MCF 10A (cell line): ENCODE measurements at regions of chr5 and their contacts with region 1.

Region 1: GRCh38 chr5:178232124-178232919 is at the start of gene PHYKPL:
- DNase-seq: peak; percentile 84
- H3K4me3 Mint-ChIP-seq: peak within 1 kb of the TSS; percentile 80
- H3K27ac Mint-ChIP-seq: peak within 1 kb of the TSS; percentile 84
- H3K4me1 Mint-ChIP-seq: peaks cover 57% of the 10 kb centered on the region
- H3K27me3 Mint-ChIP-seq: no peaks in the 10 kb centered on the region
- CTCF ChIP-seq: no peak
- total RNA-seq, gene PHYKPL: 112 and 115 TPM in 2 replicates

Region 2: DNA sequence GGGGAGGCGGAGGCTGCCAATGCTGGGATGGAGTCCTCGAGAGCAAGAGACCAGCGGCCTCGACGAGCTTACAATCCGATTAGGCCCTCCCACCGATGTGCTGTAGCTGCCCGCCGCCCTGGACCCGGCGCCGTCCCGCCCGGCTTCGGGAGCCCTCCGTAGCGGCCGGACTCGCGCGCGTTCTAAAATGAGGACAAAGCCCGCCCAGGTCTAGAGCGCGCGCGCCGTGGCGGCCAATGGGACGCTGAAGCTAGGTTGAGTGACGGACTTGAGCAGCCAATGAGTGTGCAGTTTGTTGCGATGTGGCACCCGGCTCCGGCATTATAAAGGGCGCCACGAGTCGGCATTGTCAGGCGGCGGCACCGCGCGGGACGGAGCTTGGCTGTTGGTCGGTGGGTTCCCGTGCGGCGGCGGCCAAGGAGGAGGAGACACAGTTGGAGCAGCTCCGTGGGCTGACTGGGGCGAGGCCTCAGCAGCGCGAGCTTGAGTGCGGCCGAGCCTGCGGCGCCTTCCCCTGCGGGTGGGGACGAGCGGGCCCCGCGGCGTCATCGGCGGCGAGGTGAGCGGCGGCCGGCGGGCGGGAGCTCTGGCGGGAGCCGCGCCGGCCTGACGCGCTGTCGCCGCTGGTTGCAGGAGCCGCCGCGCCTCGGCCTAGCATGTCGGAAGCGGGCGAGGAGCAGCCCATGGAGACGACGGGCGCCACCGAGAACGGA is 28.0 kb before region 1 on chr5 and contains the start of gene HNRNPAB:
- CTCF ChIA-PET with region 1: interaction called, 5 read pairs
- POLR2A ChIA-PET with region 1: interaction called, 32 read pairs
- intact Hi-C with region 1: loop called (anchors 2 kb)
- DNase-seq: peak; percentile 98
- H3K4me3 Mint-ChIP-seq: peak within 1 kb of the TSS; percentile 99
- H3K27ac Mint-ChIP-seq: peak within 1 kb of the TSS; percentile 99
- H3K4me1 Mint-ChIP-seq: peaks cover 50% of the 10 kb centered on the region
- H3K27me3 Mint-ChIP-seq: no peaks in the 10 kb centered on the region
- CTCF ChIP-seq: no peak
- total RNA-seq, gene HNRNPAB: 313 and 364 TPM in 2 replicates

Region 3: GRCh38 chr5:178213003-178213449 is 19.3 kb before region 1 on chr5:
- CTCF ChIA-PET with region 1: interaction called, 5 read pairs
- POLR2A ChIA-PET with region 1: interaction called, 32 read pairs
- intact Hi-C with region 1: no loop called
- DNase-seq: no peak
- H3K4me3 Mint-ChIP-seq: no peak overlapping the region
- H3K27ac Mint-ChIP-seq: peak overlapping the region; percentile 61
- H3K4me1 Mint-ChIP-seq: peaks cover 14% of the 10 kb centered on the region
- H3K27me3 Mint-ChIP-seq: no peaks in the 10 kb centered on the region
- CTCF ChIP-seq: no peak

Region 4: GRCh38 chr5:178252258-178252657 is 19.9 kb after region 1 on chr5:
- CTCF ChIA-PET with region 1: interaction called, 22 read pairs
- POLR2A ChIA-PET with region 1: interaction called, 5 read pairs
- intact Hi-C with region 1: no loop called
- DNase-seq: no peak
- H3K4me3 Mint-ChIP-seq: no peak overlapping the region
- H3K27ac Mint-ChIP-seq: no peak overlapping the region
- H3K4me1 Mint-ChIP-seq: peaks cover 7% of the 10 kb centered on the region
- H3K27me3 Mint-ChIP-seq: no peaks in the 10 kb centered on the region
- CTCF ChIP-seq: no peak

Region 5: DNA sequence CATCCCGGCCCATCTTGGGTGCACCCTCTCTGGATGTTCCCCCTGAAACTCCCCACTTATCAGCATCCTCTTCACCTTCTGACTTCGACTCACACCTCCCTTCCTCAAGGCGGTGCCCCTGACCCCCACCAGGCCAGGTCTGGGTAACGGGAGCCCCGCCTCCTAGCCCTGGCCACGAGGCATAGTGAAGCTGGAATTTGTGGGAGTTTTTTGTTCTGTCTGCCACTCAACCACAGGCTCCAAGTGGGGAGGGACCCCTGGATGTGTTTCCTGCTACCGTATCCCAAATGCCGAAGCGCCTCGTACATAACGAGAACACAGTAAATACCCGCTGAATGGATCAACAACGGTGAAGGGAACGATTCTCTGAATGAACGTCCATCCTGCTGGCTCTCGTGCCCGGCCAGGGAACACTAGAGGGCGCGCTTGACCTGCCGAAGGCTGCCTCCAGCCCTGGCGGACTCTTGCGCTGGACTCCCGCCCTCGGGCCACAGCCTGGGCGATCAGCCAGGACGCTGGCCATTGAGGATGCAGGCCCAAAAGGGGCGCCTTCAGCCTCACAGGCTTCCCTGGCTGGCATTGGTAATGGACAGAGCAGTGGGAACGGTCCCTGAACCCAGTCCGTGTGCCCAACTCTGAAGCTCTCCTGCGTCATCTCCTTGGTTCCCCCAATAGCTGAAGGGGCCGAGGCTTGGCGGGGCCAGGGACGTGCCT is 47.6 kb after region 1 on chr5:
- CTCF ChIA-PET with region 1: interaction called, 10 read pairs
- POLR2A ChIA-PET with region 1: interaction called, 3 read pairs
- intact Hi-C with region 1: loop called (anchors 2 kb)
- DNase-seq: peak; percentile 87
- H3K4me3 Mint-ChIP-seq: no peak overlapping the region
- H3K27ac Mint-ChIP-seq: no peak overlapping the region
- H3K4me1 Mint-ChIP-seq: peaks cover 30% of the 10 kb centered on the region
- H3K27me3 Mint-ChIP-seq: no peaks in the 10 kb centered on the region
- CTCF ChIP-seq: peak; percentile 99

Region 6: GRCh38 chr5:178304761-178305645 is 72.7 kb after region 1 on chr5:
- CTCF ChIA-PET with region 1: no interaction called
- POLR2A ChIA-PET with region 1: no interaction called
- intact Hi-C with region 1: no loop called
- DNase-seq: no peak
- H3K4me3 Mint-ChIP-seq: no peak overlapping the region
- H3K27ac Mint-ChIP-seq: no peak overlapping the region
- H3K4me1 Mint-ChIP-seq: no peaks in the 10 kb centered on the region
- H3K27me3 Mint-ChIP-seq: peaks cover 46% of the 10 kb centered on the region
- CTCF ChIP-seq: no peak

Region 7: DNA sequence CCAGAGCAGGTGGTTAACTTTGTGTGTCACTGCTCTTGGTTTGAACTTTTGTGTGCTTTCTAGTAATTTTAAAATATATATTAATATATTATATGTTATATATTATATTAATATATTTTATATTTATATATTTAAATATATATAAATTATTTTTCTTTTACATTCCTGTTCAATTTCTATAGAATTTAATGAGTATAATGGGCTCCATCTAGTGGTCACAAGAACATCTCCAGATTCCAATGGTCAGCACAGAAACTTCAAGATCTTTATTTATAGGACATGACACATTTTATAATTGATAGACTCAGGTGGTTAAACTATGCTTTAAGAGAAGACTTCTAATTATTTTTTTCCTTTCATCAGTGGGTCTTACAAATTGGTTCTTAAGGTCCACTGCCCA is 318.7 kb after region 1 on chr5:
- CTCF ChIA-PET with region 1: interaction called, 7 read pairs
- POLR2A ChIA-PET with region 1: interaction called, 3 read pairs
- intact Hi-C with region 1: loop called (anchors 2 kb)
- DNase-seq: peak; percentile 46
- H3K4me3 Mint-ChIP-seq: no peak overlapping the region
- H3K27ac Mint-ChIP-seq: no peak overlapping the region
- H3K4me1 Mint-ChIP-seq: peaks cover 6% of the 10 kb centered on the region
- H3K27me3 Mint-ChIP-seq: no peaks in the 10 kb centered on the region
- CTCF ChIP-seq: peak; percentile 30

Region 8: DNA sequence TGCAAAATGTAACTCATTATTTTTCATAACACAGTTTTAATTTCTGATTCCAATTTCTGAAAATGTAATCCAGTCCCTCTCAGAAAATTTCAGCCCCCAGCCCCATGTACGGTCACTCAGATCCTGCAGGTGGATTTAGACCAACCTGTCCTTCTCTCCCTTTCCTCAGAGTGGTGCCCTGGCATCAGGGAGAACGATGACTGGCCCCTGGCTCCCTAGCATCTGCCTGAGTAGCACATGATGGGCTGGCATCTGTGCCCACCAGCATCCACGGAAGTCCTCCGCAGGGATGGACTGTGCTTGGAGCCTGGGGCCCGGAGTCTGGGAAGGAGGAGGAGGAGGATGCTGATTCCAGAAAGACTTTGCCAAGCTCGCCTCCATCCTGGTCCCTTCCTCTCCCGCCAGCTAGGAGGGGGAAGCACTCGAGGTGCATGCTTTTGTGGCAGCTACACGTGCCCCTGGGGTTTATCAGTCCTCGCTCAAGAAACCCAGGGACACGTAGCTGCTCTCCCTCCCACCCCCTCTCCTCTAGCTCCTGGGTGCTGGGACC is 1263.7 kb after region 1 on chr5:
- CTCF ChIA-PET with region 1: interaction called, 3 read pairs
- POLR2A ChIA-PET with region 1: no interaction called
- intact Hi-C with region 1: loop called (anchors 2 kb)
- DNase-seq: peak; percentile 39
- H3K4me3 Mint-ChIP-seq: no peak overlapping the region
- H3K27ac Mint-ChIP-seq: no peak overlapping the region
- H3K4me1 Mint-ChIP-seq: no peaks in the 10 kb centered on the region
- H3K27me3 Mint-ChIP-seq: no peaks in the 10 kb centered on the region
- CTCF ChIP-seq: peak; percentile 21